H1 (cell line): ENCODE measurements at regions of chr3 and their contacts with region 1.

Region 1: DNA sequence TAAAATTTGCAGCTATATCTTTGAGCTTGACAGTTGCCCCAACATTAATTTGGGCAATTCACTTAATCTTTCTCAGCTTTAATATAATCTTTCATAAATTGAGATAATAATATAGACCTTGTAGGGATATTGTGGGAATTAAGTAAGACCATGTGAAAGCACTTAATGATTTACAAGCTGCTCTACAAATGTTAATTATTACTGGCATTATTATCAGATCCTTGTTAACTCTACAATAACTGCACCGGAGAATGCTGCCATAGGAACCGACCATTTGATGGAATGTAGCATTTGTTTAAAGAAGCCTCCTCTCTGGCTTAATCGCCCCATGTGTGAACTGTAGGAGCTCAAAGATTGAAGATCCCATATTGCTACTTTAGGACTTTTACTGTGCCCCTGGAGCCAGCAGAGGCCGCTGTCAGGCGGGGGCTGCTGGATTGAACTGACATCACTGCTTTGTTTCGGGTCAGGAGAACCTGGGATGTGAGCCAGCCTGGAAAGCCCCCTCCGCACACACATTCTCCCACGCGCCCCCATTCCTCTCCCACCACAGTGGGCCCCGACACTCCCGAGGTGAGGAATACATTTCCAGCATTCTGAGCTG is 154.2 kb upstream of the TNIK start:
- DNase-seq: peak; percentile 29 to 76
- H3K4me3 ChIP-seq: no peak overlapping the region
- H3K27ac ChIP-seq: no peak overlapping the region
- H3K4me1 ChIP-seq: no peaks in the 10 kb centered on the region
- H3K27me3 ChIP-seq: no peaks in the 10 kb centered on the region
- CTCF ChIP-seq: peak; percentile 78 to 82 (median 78)
- EP300 ChIP-seq: 0 out of 3 replicates have a peak, but pooled peaks of 1 of the 2 experiments have one; percentile 19
- POLR2A ChIP-seq: no peak
- RAD21 ChIP-seq: peak; percentile 74 to 84

Region 2: DNA sequence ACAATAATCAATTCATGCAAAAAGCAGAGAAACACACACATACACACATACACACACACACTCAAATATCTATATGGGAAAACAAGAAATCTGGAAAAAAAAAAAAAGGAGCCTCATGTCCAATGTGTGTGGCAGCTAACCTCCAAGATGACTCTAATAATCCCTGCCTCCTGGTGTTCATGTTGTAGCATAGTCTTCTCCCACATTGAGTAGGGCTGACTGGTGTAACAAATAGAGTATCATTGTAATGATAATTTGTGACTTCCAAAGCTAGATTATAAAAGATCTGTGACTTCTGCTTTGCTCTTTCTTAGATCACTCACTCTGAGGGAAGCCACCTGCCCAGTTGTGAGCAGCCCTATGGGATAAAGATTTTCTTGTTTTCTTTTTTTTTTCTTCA is 23.4 kb before region 1 on chr3:
- CTCF ChIA-PET with region 1: interaction called, 19 read pairs
- POLR2A ChIA-PET with region 1: no interaction called
- DNase-seq: no peak
- H3K4me3 ChIP-seq: no peak overlapping the region
- H3K27ac ChIP-seq: no peak overlapping the region
- H3K4me1 ChIP-seq: peaks cover 0 to 3% (median 0%) of the 10 kb centered on the region in 4 experiments; a peak in 1 of 7 replicates
- H3K27me3 ChIP-seq: no peaks in the 10 kb centered on the region
- CTCF ChIP-seq: no peak
- EP300 ChIP-seq: no peak
- POLR2A ChIP-seq: no peak
- RAD21 ChIP-seq: no peak; a peak in 1 of 4 replicates

Region 3: DNA sequence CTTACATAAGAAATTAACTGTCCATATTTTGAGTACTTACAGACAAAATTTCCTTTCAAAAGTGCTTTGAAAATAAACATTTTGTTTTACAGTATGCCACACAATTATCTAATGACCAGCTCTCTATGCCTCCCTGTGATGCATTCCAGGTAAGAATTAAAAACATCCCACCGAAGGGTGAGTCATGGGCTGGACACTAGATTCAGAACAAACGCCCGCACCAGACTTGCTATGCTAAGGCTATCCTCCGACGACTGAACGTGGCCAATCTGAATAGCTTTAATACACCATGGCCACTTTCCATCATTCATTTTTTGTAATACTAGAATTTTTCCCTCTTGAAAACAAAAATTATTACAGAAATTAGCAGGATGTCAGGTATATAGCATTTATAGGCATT is 14.4 kb before region 1 on chr3:
- CTCF ChIA-PET with region 1: interaction called, 19 read pairs
- POLR2A ChIA-PET with region 1: no interaction called
- DNase-seq: no peak
- H3K4me3 ChIP-seq: no peak overlapping the region
- H3K27ac ChIP-seq: no peak overlapping the region
- H3K4me1 ChIP-seq: no peaks in the 10 kb centered on the region
- H3K27me3 ChIP-seq: no peaks in the 10 kb centered on the region
- CTCF ChIP-seq: no peak
- EP300 ChIP-seq: no peak
- POLR2A ChIP-seq: no peak
- RAD21 ChIP-seq: no peak

Region 4: GRCh38 chr3:171660188-171660587 is 45.8 kb after region 1 on chr3:
- CTCF ChIA-PET with region 1: interaction called, 10 read pairs
- POLR2A ChIA-PET with region 1: no interaction called
- DNase-seq: no peak
- H3K4me3 ChIP-seq: no peak overlapping the region
- H3K27ac ChIP-seq: no peak overlapping the region
- H3K4me1 ChIP-seq: no peaks in the 10 kb centered on the region
- H3K27me3 ChIP-seq: no peaks in the 10 kb centered on the region
- CTCF ChIP-seq: no peak
- EP300 ChIP-seq: no peak
- POLR2A ChIP-seq: no peak
- RAD21 ChIP-seq: no peak